GM10248 (cell line): ENCODE measurements at regions of chr14 and their contacts with region 1.

Region 1: GRCh38 chr14:23301288-23301968 is 1.2 kb downstream of the PPP1R3E start:
- DNase-seq: peak; percentile 97
- CTCF ChIP-seq: peak; percentile 85

Region 2: DNA sequence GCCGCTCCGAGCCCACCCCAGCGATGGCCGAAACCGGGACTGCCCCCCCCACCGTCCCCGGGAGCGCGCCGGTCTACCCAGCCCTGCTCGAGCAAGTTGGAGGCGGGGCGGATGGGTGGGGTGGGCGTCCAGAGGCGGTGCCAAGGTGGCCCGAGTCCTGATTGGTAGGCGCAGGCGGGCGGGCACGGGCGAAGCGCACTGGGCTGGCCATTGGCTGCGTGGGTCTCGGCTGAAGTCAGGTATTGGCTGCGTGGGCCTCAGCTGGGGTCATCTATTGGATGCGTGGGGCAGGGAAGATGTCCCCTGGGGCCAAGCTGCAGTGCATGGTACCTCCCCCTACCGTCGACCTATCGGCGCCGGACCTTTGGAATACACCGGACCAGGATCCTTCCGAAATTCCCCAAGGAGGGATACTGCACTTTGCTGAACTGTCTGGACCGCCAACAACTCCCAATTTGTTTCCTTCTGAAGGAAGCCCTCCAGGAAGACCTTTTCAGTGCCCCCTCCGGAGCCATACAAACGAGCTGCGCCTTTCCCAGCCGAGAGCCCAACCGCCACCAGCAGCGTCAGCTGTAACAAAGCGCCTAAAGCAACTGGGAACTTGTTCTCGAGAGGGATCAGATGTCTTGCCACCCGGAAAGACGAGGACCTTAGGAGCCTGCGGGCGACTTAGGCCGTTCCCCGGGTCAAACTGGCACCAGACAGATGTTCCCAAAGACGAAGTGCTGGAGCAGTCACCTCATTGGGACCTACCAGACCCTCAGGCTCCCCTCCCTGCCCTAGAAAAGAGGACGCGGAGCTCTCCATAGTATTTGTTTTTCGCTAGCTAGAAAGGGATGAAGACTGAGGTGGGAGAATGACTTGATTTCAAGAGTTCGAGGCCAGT is 15.2 kb before region 1 on chr14 and contains the start of gene HOMEZ:
- CTCF ChIA-PET with region 1: interaction called, 55 read pairs
- POLR2A ChIA-PET with region 1: interaction called, 12 read pairs
- DNase-seq: peak; percentile 97
- CTCF ChIP-seq: no peak

Region 3: GRCh38 chr14:23320774-23321571 is 19.5 kb after region 1 on chr14 and contains the start of gene PABPN1:
- CTCF ChIA-PET with region 1: interaction called, 136 read pairs
- POLR2A ChIA-PET with region 1: interaction called, 26 read pairs
- DNase-seq: peak; percentile 96
- CTCF ChIP-seq: no peak

Region 4: DNA sequence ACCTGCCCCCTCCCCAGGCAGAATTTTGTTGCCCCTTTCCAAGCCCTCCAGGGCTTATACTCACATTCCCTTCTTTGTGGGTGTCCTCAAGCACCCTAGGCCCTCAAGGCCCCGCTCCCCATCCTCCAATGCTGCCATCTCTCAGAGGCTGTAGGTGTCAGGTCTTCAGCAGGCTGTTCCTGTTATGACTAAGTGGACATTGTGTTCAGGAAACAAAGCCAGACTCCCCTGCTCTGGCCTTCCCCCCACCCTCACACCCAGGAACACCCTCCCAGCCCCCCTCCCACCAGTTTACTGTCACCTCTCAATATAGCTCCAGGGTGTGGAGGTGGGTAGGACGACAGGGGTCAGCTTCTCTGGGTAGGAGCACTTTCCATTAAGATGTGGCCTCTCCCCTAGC is 108.0 kb after region 1 on chr14:
- CTCF ChIA-PET with region 1: no interaction called
- POLR2A ChIA-PET with region 1: no interaction called
- DNase-seq: peak; percentile 66
- CTCF ChIP-seq: no peak